PC-3 (cell line): ENCODE measurements at regions of chr20 and their contacts with region 1.

Region 1: GRCh38 chr20:19802492-19803158 is 44.6 kb downstream of the RIN2 start:
- DNase-seq: peak; percentile 87
- ATAC-seq: peak; percentile 88
- H3K4me3 ChIP-seq: no peak overlapping the region
- H3K27ac ChIP-seq: peak overlapping the region; percentile 52
- H3K4me1 ChIP-seq: peaks cover 28% of the 10 kb centered on the region
- H3K27me3 ChIP-seq: no peaks in the 10 kb centered on the region
- CTCF ChIP-seq: peak; percentile 84

Region 2: DNA sequence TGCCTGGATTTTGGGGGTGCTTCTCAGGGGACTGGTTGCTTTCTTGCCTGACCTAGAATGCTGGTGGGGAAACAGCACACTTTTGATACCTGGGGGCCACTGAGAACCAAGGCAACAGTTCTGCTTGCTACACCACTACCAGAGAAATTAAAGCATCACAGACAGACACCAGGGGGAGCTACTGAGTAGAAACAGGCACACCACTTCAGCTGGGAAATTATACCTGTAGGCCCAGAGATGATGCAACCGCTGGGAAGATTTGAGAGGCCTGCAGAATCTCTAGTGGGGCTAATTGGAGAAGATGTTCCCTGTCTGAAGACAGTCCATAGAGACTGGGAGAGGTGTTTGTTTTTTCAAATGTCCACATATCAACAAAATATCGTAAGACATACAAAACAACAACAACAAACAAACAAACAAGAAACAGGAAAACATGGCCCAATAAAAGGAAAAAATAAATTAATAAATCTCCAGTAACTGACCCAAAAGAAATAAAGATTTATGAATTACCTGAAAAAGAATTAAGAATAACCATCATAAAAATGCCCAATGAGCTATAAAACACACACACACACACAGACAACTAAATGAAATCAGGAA is 174.0 kb before region 1 on chr20:
- CTCF ChIA-PET with region 1: no interaction called
- POLR2A ChIA-PET with region 1: no interaction called
- intact Hi-C with region 1: loop called (anchors 1 kb)
- DNase-seq: peak; percentile 86
- ATAC-seq: peak; percentile 93
- H3K4me3 ChIP-seq: no peak overlapping the region
- H3K27ac ChIP-seq: no peak overlapping the region
- H3K4me1 ChIP-seq: no peaks in the 10 kb centered on the region
- H3K27me3 ChIP-seq: peaks cover 24% of the 10 kb centered on the region
- CTCF ChIP-seq: peak; percentile 90